Activated T-helper 2 cell treated with anti-CD3 and anti-CD28 coated beads, Interferon-gamma antibody, Interleukin-2, Interleukin-4, amounts not matched to agents 10 μg/mL and 5 μg/mL and 100 μg/mL, durations not matched to agents 14 hours and 24 hours and 36 hours (primary cell): ENCODE measurements at regions of chr1 and their contacts with region 1.

Region 1: DNA sequence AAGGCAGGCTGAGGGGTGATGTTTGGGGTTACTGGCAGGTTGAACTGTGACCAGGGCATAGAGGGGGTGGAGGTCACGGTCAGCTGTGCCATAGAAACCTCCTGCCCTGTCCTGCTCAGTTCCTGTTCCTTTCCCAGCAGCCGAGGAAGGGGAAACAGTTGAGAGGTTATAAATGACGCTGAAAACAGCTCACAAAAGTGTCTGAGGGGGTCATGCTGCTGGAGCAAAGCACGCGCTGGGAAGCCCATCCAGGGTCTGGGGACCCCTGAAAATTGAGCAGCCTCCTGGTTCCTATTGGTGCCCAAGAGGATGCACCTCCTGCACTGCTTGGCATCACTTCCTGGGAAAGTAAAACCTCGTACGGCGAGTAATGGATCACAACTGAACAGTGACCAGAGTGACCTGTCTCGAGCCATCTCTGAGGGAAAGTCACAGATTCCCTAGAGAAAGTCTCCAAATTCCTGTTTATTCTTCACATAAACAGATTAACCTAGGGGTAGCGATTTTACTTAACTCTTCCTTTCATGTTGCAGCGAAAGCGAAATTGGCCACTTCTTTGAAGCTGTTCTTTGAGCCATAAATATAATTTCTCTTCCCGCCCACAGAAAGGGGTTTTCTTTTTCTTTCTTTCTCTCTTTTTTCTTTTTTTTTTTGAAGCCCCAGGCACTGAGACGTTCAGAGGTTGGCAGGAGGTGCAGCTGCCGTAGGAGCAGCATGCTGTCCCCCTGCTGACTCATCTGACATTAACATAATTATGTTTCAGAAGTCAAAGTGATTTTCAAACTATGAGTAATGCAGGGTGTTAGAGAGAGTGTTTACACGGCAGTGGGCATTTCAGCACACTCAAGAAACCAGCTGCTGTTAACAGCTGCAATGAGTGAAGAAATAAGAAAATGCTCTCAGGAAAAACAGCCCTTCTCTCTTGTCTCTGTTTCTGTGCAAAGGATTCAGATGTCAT is 41.8 kb upstream of the ATF3 start:
- DNase-seq: peak; percentile 47
- H3K4me3 Mint-ChIP-seq: peak overlapping the region; percentile 89
- H3K27ac Mint-ChIP-seq: peak overlapping the region; percentile 95
- H3K4me1 Mint-ChIP-seq: peaks cover 25% of the 10 kb centered on the region
- H3K27me3 Mint-ChIP-seq: peaks cover 14% of the 10 kb centered on the region

Region 2: DNA sequence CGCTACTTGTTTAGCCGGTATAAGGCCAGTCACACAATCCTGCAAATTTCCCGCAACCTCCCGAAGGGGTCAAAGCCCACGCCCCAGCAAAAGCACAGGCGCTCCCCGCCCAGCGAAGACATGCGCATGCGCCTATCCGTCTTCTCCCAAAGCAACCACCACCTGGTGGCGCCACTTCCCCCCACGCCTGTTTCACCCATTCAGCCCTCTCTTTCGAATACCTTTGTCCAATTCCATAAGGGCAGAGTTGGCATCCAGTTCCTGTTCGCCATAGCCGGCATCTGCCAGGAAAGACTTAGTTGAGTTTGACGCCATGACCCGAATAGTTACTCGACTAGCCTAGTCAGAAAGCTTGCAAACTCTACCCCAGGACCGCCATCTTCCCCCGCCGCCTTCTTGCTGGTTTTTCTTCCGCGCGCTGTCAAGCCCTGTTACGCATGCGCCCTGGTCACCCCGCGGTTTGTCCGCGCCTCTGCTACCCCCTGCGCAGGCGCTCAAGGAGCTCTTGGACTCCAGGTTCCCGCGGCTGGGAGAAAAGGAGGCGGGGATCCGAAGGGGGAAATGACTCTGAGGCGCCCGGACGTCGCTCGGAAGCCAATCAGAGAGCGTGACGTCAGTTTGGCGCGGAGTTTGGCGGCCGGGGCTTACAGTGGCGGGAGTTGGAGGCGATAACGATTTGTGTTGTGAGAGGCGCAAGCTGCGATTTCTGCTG is 531.5 kb before region 1 on chr1 and contains the starts of genes DTL and INTS7:
- intact Hi-C with region 1: loop called (anchors 1 kb)
- DNase-seq: peak; percentile 99
- H3K4me3 Mint-ChIP-seq: peak within 1 kb of the TSS; percentile 95
- H3K27ac Mint-ChIP-seq: peak within 1 kb of the TSS; percentile 85
- H3K4me1 Mint-ChIP-seq: peaks cover 58% of the 10 kb centered on the region
- H3K27me3 Mint-ChIP-seq: no peaks in the 10 kb centered on the region
- total RNA-seq, gene DTL: 73.9 and 77.0 TPM in 2 replicates
- total RNA-seq, gene INTS7: 33.3 and 33.8 TPM in 2 replicates

Region 3: GRCh38 chr1:212595787-212596714 is 29.2 kb after region 1 on chr1:
- intact Hi-C with region 1: loop called (anchors 1 kb)
- DNase-seq: peak; percentile 55
- H3K4me3 Mint-ChIP-seq: peak overlapping the region; percentile 43
- H3K27ac Mint-ChIP-seq: peak overlapping the region; percentile 91
- H3K4me1 Mint-ChIP-seq: peaks cover 26% of the 10 kb centered on the region
- H3K27me3 Mint-ChIP-seq: peaks cover 7% of the 10 kb centered on the region

Region 4: GRCh38 chr1:212608209-212608955 is 41.6 kb after region 1 on chr1 and contains the start of gene ATF3:
- intact Hi-C with region 1: loop called (anchors 1 kb)
- DNase-seq: peak; percentile 88
- H3K4me3 Mint-ChIP-seq: peak within 1 kb of the TSS; percentile 88
- H3K27ac Mint-ChIP-seq: peak within 1 kb of the TSS; percentile 91
- H3K4me1 Mint-ChIP-seq: peaks cover 44% of the 10 kb centered on the region
- H3K27me3 Mint-ChIP-seq: peaks cover 39% of the 10 kb centered on the region
- total RNA-seq, gene ATF3: 17.9 and 23.9 TPM in 2 replicates

Region 5: DNA sequence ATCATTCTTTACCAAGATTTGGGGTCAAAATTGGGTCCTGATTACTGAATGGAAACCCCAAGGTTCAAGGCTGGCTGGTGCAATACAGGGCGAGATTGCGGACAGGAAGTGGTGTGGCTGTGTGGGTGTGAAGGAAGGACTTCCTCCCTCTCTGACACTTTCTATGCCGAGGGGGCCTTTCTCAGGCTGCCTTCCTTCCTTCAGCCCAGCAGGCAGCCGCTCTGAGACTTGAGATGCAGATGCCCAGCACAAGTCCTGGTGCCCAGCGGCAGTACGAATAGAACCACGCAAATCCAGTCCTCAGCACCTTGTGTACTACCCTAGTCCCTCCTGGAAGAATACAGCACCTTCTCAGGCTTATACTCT is 116.5 kb after region 1 on chr1:
- intact Hi-C with region 1: loop called (anchors 1 kb)
- DNase-seq: no peak
- H3K4me3 Mint-ChIP-seq: peak overlapping the region; percentile 41
- H3K27ac Mint-ChIP-seq: peak overlapping the region; percentile 88
- H3K4me1 Mint-ChIP-seq: peaks cover 62% of the 10 kb centered on the region
- H3K27me3 Mint-ChIP-seq: no peaks in the 10 kb centered on the region

Region 6: DNA sequence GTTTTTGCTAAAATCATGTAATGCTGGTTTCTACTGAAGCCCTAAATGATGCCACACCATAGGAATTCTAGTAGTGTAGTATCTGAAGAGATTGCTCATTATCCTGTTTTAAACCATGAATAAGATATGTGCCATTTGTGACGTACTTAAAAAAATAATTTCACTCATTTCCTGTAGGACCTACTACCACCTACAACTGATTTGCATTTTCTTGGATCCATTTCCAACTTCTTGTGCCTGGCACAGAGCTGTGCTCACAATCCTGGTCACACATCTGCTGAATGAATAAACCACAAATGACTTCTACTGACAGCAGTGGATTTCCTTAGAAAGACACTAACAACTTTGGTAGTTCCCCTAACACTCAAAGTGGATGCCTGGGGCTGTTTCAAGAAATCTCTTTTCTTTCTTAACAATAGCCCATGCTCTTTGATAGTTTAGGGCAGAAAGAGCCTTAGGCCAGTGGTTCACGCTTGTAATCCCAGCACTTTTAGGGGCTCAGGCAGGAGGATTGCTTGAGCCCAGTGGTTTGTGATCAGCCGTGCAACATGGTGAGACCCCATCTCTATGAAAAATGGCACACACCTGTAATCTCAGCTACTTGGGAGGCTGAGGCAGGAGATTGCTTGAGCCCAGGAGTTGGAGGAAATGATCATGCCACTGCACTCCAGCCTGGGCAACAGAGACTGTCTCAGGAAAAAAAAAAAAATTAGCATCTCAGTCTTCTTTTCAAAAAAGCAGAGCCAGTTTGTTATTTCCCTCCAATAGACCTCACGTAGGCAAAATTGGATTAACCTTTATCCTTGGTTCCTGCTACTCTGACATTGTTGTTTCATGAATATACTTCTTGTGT is 145.9 kb after region 1 on chr1:
- intact Hi-C with region 1: loop called (anchors 2 kb)
- DNase-seq: no peak
- H3K4me3 Mint-ChIP-seq: peak overlapping the region; percentile 27
- H3K27ac Mint-ChIP-seq: peak overlapping the region; percentile 91
- H3K4me1 Mint-ChIP-seq: peaks cover 44% of the 10 kb centered on the region
- H3K27me3 Mint-ChIP-seq: no peaks in the 10 kb centered on the region

Region 7: GRCh38 chr1:213015099-213016050 is 448.6 kb after region 1 on chr1 and contains the start of gene ANGEL2:
- intact Hi-C with region 1: loop called (anchors 10 kb)
- DNase-seq: peak; percentile 95
- H3K4me3 Mint-ChIP-seq: peak within 1 kb of the TSS; percentile 99
- H3K27ac Mint-ChIP-seq: peak within 1 kb of the TSS; percentile 100
- H3K4me1 Mint-ChIP-seq: peaks cover 27% of the 10 kb centered on the region
- H3K27me3 Mint-ChIP-seq: peaks cover 6% of the 10 kb centered on the region
- total RNA-seq, gene ANGEL2: 46.2 and 46.3 TPM in 2 replicates